HCT116 (cell line): ENCODE measurements at regions of chr3 and their contacts with region 1.

Region 1: GRCh38 chr3:165254812-165255211 is 58.6 kb upstream of the SLITRK3 start:
- DNase-seq: peak; percentile 39
- ATAC-seq: peak; percentile 84
- H3K4me3 ChIP-seq: no peak overlapping the region
- H3K27ac ChIP-seq: no peak overlapping the region
- H3K4me1 ChIP-seq: peaks cover 0 to 6% of the 10 kb centered on the region in 2 experiments; a peak in 1 of 4 replicates
- H3K27me3 ChIP-seq: no peaks in the 10 kb centered on the region
- CTCF ChIP-seq: peak; percentile 33 to 58 (median 35); a peak in 4 of 6 replicates
- POLR2A ChIP-seq: no peak
- RAD21 ChIP-seq: peak; percentile 76

Region 2: GRCh38 chr3:163328680-163329079 is 1926.1 kb before region 1 on chr3:
- CTCF ChIA-PET with region 1: no interaction called
- POLR2A ChIA-PET with region 1: no interaction called
- RAD21 ChIA-PET with region 1: no interaction called
- intact Hi-C with region 1: no loop called
- DNase-seq: no peak
- ATAC-seq: peak; percentile 36; the same call in 1 of the 2 replicates
- H3K4me3 ChIP-seq: no peak overlapping the region
- H3K27ac ChIP-seq: no peak overlapping the region
- H3K4me1 ChIP-seq: no peaks in the 10 kb centered on the region
- H3K27me3 ChIP-seq: no peaks in the 10 kb centered on the region
- CTCF ChIP-seq: peak in 1 of 3 experiments; percentile 24; a peak in 1 of 6 replicates
- POLR2A ChIP-seq: no peak
- RAD21 ChIP-seq: no peak

Region 3: GRCh38 chr3:165502707-165503106 is 247.9 kb after region 1 on chr3:
- CTCF ChIA-PET with region 1: no interaction called
- POLR2A ChIA-PET with region 1: no interaction called
- RAD21 ChIA-PET with region 1: no interaction called
- intact Hi-C with region 1: no loop called
- DNase-seq: no peak
- ATAC-seq: no peak
- H3K4me3 ChIP-seq: no peak overlapping the region
- H3K27ac ChIP-seq: no peak overlapping the region
- H3K4me1 ChIP-seq: no peaks in the 10 kb centered on the region
- H3K27me3 ChIP-seq: no peaks in the 10 kb centered on the region
- CTCF ChIP-seq: no peak
- POLR2A ChIP-seq: no peak
- RAD21 ChIP-seq: no peak

Region 4: DNA sequence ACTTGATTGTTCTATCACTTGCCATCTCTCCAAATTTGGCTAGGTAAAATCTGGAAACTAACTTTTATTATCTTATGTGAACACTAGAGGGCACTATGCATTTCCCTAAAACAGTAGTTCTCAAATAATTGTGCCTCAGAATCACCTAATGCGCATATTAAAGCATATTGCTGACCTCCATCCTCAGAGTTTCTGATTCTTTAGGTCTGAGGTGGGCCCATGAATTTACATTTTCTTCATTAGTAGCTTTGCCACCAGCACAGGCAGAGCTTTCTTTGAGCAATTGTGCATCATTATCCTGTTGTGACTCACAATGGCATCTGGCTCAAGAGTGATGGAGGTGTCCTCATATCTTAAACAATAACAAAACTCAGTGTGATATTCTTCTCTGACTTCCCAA is 599.9 kb after region 1 on chr3:
- CTCF ChIA-PET with region 1: interaction called, 3 read pairs
- POLR2A ChIA-PET with region 1: no interaction called
- RAD21 ChIA-PET with region 1: no interaction called
- intact Hi-C with region 1: loop called (anchors 10 kb)
- DNase-seq: no peak
- ATAC-seq: no peak
- H3K4me3 ChIP-seq: no peak overlapping the region
- H3K27ac ChIP-seq: no peak overlapping the region
- H3K4me1 ChIP-seq: no peaks in the 10 kb centered on the region
- H3K27me3 ChIP-seq: no peaks in the 10 kb centered on the region
- CTCF ChIP-seq: peak; percentile 29 to 73 (median 33); a peak in 5 of 6 replicates
- POLR2A ChIP-seq: no peak
- RAD21 ChIP-seq: peak; percentile 55

Region 5: DNA sequence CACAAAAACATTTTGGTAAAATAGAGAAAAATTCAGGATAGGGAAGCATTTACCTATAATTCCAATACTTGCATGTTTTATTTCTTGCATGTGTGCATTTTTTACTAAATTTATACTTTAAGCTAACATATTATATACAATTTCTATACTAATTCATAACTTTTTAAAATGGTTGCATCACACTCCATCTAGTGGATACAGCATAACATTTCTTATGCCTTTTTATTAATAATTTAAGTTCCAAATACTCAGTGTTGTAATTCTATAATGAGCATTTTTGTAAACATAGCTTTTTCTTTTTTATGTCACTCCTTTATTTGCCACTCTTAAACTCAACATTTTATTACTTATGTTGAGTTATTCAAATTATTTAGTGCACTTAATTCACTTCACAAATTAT is 1647.6 kb after region 1 on chr3:
- CTCF ChIA-PET with region 1: interaction called, 5 read pairs
- POLR2A ChIA-PET with region 1: no interaction called
- RAD21 ChIA-PET with region 1: no interaction called
- intact Hi-C with region 1: loop called (anchors 5 kb)
- DNase-seq: no peak
- ATAC-seq: no peak
- H3K4me3 ChIP-seq: no peak overlapping the region
- H3K27ac ChIP-seq: no peak overlapping the region
- H3K4me1 ChIP-seq: no peaks in the 10 kb centered on the region
- H3K27me3 ChIP-seq: no peaks in the 10 kb centered on the region
- CTCF ChIP-seq: peak in 2 of 3 experiments; percentile 21 to 35; a peak in 3 of 6 replicates
- POLR2A ChIP-seq: no peak
- RAD21 ChIP-seq: peak; percentile 44